ENCODE measurements at regions of chr7 and their contacts with region 1.

Region 1: GRCh38 chr7:92641921-92642511 is 51.8 kb upstream of the FAM133B start:
- DNase-seq: peak; percentile 74 to 92 (median 91)
- H3K4me3 ChIP-seq: peak overlapping the region in 1 of 7 experiments; percentile 2
- H3K27ac ChIP-seq: peak overlapping the region; percentile 88 to 90
- H3K4me1 ChIP-seq: peaks cover 46 to 99% (median 84%) of the 10 kb centered on the region in 4 experiments
- H3K27me3 ChIP-seq: no peaks in the 10 kb centered on the region

Region 2: GRCh38 chr7:92489634-92490033 is 152.4 kb before region 1 on chr7:
- CTCF ChIA-PET with region 1: no interaction called
- POLR2A ChIA-PET with region 1: no interaction called
- DNase-seq: no peak
- H3K4me3 ChIP-seq: no peak overlapping the region
- H3K27ac ChIP-seq: no peak overlapping the region
- H3K4me1 ChIP-seq: no peaks in the 10 kb centered on the region
- H3K27me3 ChIP-seq: no peaks in the 10 kb centered on the region

Region 3: DNA sequence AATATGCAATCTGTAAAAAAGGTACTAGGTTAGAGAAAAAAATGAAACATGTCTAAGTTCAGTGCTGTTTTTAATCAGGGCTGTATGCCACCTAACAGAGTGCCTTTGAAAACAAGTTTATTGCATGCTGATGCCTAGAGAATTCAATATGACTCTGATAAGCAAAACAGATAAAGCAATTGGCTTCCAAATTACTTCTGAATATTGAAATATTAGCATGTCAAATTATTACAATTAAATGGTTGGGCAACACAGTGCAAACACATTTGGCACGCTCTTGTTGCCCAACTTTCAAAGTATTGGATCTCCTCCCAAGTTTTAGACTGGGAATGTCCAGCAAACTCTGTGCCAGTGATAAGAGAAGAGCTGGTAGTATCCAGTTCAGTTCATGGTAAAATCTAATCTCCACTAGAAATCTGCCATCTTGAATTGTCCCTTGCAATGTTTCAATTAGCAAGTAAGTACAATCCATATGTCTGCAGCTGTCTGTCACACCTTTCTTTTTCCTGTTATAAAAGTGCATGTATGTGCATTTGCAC is 13.4 kb after region 1 on chr7:
- CTCF ChIA-PET with region 1: interaction called, 21 read pairs
- POLR2A ChIA-PET with region 1: interaction called, 13 read pairs
- DNase-seq: no peak
- H3K4me3 ChIP-seq: no peak overlapping the region
- H3K27ac ChIP-seq: no peak overlapping the region
- H3K4me1 ChIP-seq: peaks cover 17 to 65% (median 42%) of the 10 kb centered on the region in 4 experiments
- H3K27me3 ChIP-seq: no peaks in the 10 kb centered on the region